Heart left ventricle (tissue), 16 donors: ENCODE measurements at regions of chr2 and their contacts with region 1.

Region 1: DNA sequence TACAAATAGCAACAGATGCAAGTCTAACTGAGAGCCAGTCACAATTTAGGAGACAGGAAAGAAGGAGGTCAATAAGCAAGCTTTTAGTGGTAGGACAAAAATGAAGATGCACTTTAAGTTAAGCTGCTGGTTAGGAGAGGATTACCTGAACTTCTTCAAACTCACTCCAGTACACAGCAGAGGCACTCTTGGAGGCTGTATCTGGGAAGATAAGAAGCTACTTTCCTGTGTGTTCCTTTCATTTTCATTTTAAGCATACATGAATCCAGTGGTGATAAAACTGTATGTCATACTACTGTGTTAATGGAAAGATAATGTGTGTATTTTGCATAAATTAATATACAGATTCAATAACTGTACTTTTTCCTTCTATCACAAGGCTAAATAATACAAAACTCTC is 49.6 kb downstream of the HYCC2 start:
- DNase-seq: no peak
- ATAC-seq: no peak
- H3K4me3 ChIP-seq: no peak overlapping the region
- H3K27ac ChIP-seq: peak overlapping the region in 1 of 12 donors; percentile 7
- H3K4me1 ChIP-seq: peaks cover 0 to 10% (median 0%) of the 10 kb centered on the region in 12 donors
- H3K27me3 ChIP-seq: no peaks in the 10 kb centered on the region
- CTCF ChIP-seq: no peak
- POLR2A ChIP-seq: no peak

Region 2: GRCh38 chr2:201057087-201057521 is 35.2 kb after region 1 on chr2:
- intact Hi-C with region 1: loop called in 1 of 10 experiments (anchors 5 kb)
- DNase-seq: no peak
- ATAC-seq: peak in 1 of 4 donors; percentile 14
- H3K4me3 ChIP-seq: no peak overlapping the region
- H3K27ac ChIP-seq: peak overlapping the region in 2 of 12 donors; percentile 16 to 47
- H3K4me1 ChIP-seq: peaks cover 0 to 52% (median 17%) of the 10 kb centered on the region in 12 donors
- H3K27me3 ChIP-seq: no peaks in the 10 kb centered on the region
- CTCF ChIP-seq: no peak
- POLR2A ChIP-seq: no peak